ENCODE measurements at regions of chr3 and their contacts with region 1.

Region 1: GRCh38 chr3:141311496-141312353 is 56.6 kb upstream of the ZBTB38 start:
- DNase-seq: peak; percentile 90 to 99 (median 97)
- ATAC-seq: peak; percentile 90 to 91
- H3K4me3 Mint-ChIP-seq: peak overlapping the region; percentile 96 to 99 (median 98)
- H3K27ac Mint-ChIP-seq: peak overlapping the region; percentile 95 to 99 (median 98)
- H3K4me1 Mint-ChIP-seq: peaks cover 25 to 66% (median 56%) of the 10 kb centered on the region in 4 donors
- H3K27me3 Mint-ChIP-seq: no peaks in the 10 kb centered on the region

Region 2: GRCh38 chr3:141174674-141175073 is 137.1 kb before region 1 on chr3:
- POLR2A ChIA-PET with region 1: no interaction called
- DNase-seq: no peak
- ATAC-seq: no peak
- H3K4me3 Mint-ChIP-seq: no peak overlapping the region
- H3K27ac Mint-ChIP-seq: no peak overlapping the region
- H3K4me1 Mint-ChIP-seq: no peaks in the 10 kb centered on the region
- H3K27me3 Mint-ChIP-seq: peaks cover 2 to 10% (median 5%) of the 10 kb centered on the region in 5 donors

Region 3: DNA sequence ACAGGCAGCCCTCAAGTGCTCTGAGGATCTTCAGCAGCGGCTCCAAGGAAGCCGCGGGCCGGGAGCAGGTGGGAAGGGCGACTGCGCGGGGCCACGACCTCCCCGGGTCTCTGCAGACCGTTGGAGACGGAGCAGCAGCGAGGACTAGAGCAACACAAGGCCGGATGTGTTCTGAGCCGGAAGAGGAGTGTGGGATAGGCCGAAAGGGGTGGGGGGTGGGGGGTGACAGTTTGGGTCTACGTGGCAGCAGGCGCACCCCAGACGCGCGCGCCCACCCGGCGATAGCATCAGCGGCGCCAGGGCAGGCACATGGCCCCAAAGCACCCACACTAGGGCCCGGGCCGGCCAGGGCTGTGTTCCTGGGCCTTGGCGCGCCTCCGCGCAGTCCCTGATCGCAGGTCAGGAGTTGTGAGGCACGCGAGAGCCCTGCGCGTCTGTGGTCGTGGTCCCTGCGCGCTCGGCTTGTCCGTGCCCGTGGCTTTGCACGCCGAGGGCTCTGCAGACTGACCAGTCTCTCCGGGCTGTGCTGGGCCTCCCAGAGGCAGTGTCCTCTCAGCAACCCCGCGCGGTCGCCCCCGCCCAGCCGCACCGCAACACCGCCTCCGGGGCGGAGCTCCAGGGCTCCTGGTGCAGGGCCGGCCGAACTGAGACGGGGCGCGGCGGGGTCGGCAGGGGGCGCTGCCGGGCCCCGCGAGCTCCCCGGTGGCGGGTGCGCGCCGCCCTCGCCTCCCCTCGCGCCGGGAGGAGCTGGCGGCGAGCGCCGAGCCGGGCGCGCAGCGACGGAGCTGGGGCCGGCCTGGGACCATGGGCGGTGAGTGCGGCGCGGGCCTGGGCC is 80.4 kb before region 1 on chr3 and contains the start of gene PXYLP1:
- POLR2A ChIA-PET with region 1: interaction called, 58 read pairs
- DNase-seq: peak; percentile 77 to 91 (median 90)
- ATAC-seq: peak; percentile 88 to 89
- H3K4me3 Mint-ChIP-seq: peak within 1 kb of the TSS; percentile 89 to 98 (median 93)
- H3K27ac Mint-ChIP-seq: peak within 1 kb of the TSS; percentile 95 to 99 (median 98)
- H3K4me1 Mint-ChIP-seq: peaks cover 33 to 70% (median 52%) of the 10 kb centered on the region in 4 donors
- H3K27me3 Mint-ChIP-seq: no peaks in the 10 kb centered on the region
- polyA plus RNA-seq, gene PXYLP1: 9.9 to 18.3 (median 16.9) TPM

Region 4: GRCh38 chr3:141360888-141361598 is 49.3 kb after region 1 on chr3:
- POLR2A ChIA-PET with region 1: interaction called, 17 read pairs
- DNase-seq: peak in 5 of 10 donors; percentile 1 to 56 (median 52)
- ATAC-seq: peak; percentile 68 to 70
- H3K4me3 Mint-ChIP-seq: peak overlapping the region in 3 of 10 donors; percentile 16 to 51 (median 41)
- H3K27ac Mint-ChIP-seq: peak overlapping the region in 4 of 10 donors; percentile 41 to 82 (median 54)
- H3K4me1 Mint-ChIP-seq: peaks cover 2 to 9% (median 6%) of the 10 kb centered on the region in 4 donors
- H3K27me3 Mint-ChIP-seq: no peaks in the 10 kb centered on the region

Region 5: DNA sequence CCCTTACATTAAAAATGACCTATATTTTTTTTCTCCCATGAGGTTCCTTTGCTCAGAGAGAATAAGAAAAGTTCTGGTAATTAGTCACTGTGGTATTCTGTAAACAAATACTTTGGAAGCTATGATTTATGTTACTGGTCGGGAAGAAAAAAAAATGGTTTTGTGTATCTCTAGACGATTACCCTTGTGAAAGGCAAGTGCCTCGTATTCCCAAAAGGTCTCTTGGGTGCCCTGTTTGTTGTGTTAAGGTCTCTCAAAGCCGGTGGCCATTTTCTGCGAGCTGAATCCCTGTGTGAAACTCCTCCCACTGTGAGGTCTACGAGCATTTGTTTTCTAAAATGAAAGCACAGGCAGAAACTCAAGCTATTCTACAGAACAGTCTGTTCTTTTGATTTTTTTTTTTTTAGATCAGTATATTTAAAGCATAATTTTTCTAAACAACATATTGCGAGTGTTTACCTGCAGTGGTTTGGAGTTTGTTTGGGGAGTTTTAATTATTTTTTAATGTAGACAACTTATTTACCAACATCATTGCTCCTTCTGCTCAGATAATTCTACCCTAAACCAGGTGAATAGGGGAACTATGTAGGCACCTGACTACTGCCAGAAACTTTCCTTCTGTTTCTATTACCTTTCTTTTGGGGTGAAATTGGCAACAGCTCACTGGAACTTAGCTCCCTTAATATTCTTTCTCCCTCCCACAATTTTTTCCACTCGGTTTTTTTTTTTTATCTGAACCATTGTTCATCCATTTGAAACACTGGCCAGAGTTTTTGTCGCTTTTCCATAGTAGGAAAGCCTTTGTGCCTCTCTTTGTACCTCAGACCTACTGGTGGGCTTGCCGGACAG is 100.6 kb after region 1 on chr3:
- POLR2A ChIA-PET with region 1: interaction called, 18 read pairs
- DNase-seq: peak in 9 of 10 donors; percentile 25 to 80 (median 64)
- ATAC-seq: peak; percentile 66 to 73
- H3K4me3 Mint-ChIP-seq: peak overlapping the region; percentile 69 to 89 (median 84)
- H3K27ac Mint-ChIP-seq: peak overlapping the region; percentile 94 to 99 (median 98)
- H3K4me1 Mint-ChIP-seq: peaks cover 37 to 85% (median 76%) of the 10 kb centered on the region in 4 donors
- H3K27me3 Mint-ChIP-seq: no peaks in the 10 kb centered on the region

Region 6: DNA sequence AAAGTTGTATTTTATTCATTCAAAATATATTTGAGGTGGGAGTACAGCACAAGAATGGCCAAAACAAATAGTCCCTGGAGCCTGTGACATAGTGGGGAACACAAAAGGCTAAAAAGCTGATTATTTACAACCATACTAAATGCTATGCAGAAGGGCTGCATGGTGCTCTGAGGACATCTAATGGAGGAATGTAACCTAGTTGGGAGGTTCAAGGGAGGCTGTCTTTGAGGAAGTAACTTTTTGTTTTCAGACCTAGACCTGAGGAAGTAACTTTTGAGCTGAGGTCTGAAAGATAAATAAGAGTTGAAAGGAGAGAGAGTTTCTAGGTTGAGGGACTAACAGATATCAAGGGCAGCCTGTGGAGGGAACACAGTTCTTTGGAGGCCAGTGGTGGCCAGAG is 140.3 kb after region 1 on chr3:
- POLR2A ChIA-PET with region 1: interaction called, 46 read pairs
- DNase-seq: peak in 8 of 10 donors; percentile 18 to 77 (median 56)
- ATAC-seq: peak; percentile 96 to 97
- H3K4me3 Mint-ChIP-seq: no peak overlapping the region
- H3K27ac Mint-ChIP-seq: no peak overlapping the region
- H3K4me1 Mint-ChIP-seq: peaks cover 5 to 14% (median 11%) of the 10 kb centered on the region in 4 donors
- H3K27me3 Mint-ChIP-seq: no peaks in the 10 kb centered on the region

Region 7: DNA sequence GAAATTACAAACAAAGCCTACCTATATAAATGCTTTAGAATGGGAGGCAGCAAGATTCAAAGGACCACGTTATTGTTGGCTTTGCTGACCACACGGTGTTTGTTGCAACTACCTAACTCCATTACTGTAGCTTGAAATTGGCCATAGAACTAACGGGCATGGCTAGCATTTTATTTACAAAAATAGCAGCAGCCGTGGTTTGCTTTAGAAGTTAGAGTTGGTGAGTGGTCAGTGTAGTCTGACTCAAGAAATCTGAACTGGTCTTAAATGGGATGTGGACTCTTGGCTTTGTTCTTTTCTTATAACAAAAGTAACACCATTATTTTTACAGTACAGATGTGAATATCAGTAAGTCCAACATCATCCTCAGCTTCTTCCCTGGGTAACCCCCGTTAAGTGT is 575.3 kb after region 1 on chr3:
- POLR2A ChIA-PET with region 1: no interaction called
- DNase-seq: no peak
- ATAC-seq: no peak
- H3K4me3 Mint-ChIP-seq: no peak overlapping the region
- H3K27ac Mint-ChIP-seq: no peak overlapping the region
- H3K4me1 Mint-ChIP-seq: peaks cover 10 to 38% (median 27%) of the 10 kb centered on the region in 4 donors
- H3K27me3 Mint-ChIP-seq: no peaks in the 10 kb centered on the region

Measured in naive thymus-derived CD8-positive, alpha-beta T cell (primary cell).